Lower leg skin (tissue), 4 donors: ENCODE measurements at regions of chr2 and their contacts with region 1.

Region 1: DNA sequence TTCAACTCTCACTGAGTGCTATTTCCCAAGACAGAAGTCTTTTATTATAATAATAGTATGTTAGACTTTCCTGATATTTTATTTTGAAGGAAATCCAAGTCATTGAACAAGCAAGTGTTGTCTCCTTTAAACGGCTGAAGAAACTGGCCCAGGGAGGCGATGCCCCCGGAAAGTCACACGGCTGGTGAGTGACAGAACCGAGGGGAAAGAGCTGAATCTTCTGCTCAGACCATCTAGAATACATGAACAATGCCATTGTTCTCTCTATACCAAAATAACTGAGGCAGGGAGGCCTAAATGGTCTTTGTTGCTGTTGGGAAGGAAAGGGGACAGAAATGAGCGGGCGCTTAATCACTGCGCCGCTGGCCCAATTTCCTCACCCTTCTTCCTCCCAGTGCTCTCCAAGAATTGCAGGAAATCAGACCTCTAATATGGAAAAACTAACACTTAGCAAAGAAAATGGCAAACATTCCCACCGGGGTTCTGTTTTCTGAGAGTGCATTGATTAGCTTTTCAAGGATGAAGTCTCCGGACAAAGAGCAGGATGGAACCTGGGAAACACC is 101.5 kb downstream of the KLF7 start:
- DNase-seq: no peak
- H3K4me3 ChIP-seq: no peak overlapping the region
- CTCF ChIP-seq: no peak
- POLR2A ChIP-seq: no peak

Region 2: DNA sequence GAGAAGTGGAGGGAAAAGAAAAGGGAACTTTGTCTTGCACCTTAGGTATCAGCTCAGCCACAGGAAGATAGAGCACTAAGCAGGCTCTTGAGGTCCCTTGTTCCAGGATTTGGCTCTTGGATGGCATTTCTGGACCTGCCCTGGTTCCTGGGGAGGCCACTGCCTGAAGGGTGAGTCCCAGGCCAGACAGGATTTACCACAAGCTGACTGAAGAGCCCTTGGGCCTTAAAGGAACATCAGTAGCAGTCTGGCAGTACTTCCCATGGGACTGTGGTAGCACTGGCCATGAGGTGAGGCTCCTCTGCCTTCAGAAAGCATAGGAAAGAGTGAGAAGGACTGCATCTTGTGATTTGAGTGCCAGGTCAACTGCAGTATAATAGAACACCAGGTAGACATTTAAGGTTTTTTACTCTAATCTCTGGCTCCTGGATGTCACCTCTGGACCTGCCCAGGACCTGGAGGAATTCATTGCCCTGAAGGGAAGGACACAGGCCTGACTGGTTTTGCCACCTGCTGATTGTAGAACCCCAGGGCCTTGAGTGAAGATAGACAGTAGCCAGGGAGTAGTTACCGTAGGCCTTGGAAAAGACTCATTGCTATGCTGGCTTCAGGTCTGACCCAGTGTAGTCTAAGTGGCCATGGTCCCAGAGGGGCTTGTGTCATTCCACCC is 311.1 kb after region 1 on chr2:
- intact Hi-C with region 1: no loop called
- DNase-seq: no peak
- H3K4me3 ChIP-seq: no peak overlapping the region
- CTCF ChIP-seq: no peak
- POLR2A ChIP-seq: no peak

Region 3: DNA sequence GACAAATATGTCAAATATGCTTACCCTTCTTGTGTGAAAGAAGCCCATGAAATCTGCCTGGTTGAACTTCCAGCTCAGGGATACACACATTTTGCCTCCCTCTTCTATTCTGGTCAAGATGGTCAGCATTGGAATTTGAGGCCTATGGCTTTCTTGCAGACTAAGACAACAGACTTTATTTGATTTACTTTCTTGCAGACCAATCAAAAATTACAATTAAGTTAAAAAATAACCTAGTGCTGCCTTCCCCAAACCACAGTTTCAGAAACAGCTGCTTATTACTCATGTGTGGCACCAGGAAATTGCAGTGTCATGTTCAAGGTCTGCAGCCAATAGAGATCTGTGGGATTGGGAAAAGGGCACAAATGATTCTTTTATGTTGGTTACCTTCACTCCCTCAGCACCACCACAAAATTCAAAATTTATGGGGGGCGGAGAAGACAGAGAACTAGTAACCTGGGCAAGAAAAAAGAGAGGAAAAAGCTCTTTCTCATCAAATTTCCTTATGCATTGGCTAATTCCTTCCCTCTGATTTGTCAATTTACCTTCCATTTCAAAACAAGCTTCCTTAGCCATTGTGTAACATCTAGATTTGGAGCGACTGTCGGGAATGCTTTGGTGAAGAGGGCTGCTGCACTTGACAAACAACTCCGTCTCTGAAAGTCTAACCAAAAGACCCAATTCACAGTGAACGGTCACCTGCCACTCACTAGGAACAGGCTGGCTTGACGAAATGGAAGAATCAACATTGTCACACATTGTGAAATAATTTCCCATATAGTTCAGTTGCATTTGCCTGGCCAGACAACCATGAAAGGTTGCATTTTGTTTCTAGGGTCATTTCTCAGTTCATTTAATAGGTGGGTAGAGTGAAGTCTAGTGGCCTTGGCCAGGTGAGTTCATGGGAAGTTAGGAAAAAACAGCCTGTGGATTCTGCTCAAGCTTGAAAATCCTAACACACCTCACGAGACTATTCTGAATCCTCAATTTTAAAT is 805.9 kb after region 1 on chr2:
- intact Hi-C with region 1: loop called (anchors 5 kb)
- DNase-seq: no peak
- H3K4me3 ChIP-seq: no peak overlapping the region
- CTCF ChIP-seq: peak in 1 of 3 donors; percentile 59
- POLR2A ChIP-seq: no peak

Region 4: DNA sequence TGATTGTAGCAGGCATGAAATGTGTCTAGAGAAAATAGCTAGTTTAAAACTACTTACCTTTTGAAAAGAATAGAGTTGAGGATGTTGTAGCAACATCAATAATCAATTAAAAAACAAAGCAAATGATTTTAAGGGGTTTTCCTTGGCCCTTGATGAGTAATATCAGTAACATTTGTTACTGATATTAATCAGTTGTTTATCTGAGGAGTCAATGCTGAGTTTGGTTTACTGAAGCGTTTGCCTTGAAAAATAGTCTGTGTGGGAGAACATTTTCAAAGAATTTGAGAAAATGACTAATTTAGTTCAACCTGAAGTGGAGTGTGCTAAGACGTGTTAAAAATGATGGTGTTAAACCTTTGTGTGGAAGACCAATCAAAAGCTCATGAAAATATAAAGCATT is 1351.7 kb after region 1 on chr2:
- intact Hi-C with region 1: no loop called
- DNase-seq: no peak
- H3K4me3 ChIP-seq: no peak overlapping the region
- CTCF ChIP-seq: no peak
- POLR2A ChIP-seq: no peak